ENCODE measurements at regions of chr14 and their contacts with region 1.

Region 1: GRCh38 chr14:105300792-105301533 is at the start of gene BRF1:
- DNase-seq: peak; percentile 98 to 99
- H3K4me3 ChIP-seq: peak within 1 kb of the TSS; percentile 100
- H3K4me3 Mint-ChIP-seq: peak within 1 kb of the TSS; percentile 79
- H3K27ac Mint-ChIP-seq: peak within 1 kb of the TSS; percentile 40
- H3K4me1 ChIP-seq: no peaks in the 10 kb centered on the region
- H3K4me1 Mint-ChIP-seq: peaks cover 7% of the 10 kb centered on the region
- H3K27me3 ChIP-seq: no peaks in the 10 kb centered on the region
- H3K27me3 Mint-ChIP-seq: no peaks in the 10 kb centered on the region
- CTCF ChIP-seq: no peak
- total RNA-seq, gene BRF1: 41.6 and 43.6 TPM in 2 replicates

Region 2: DNA sequence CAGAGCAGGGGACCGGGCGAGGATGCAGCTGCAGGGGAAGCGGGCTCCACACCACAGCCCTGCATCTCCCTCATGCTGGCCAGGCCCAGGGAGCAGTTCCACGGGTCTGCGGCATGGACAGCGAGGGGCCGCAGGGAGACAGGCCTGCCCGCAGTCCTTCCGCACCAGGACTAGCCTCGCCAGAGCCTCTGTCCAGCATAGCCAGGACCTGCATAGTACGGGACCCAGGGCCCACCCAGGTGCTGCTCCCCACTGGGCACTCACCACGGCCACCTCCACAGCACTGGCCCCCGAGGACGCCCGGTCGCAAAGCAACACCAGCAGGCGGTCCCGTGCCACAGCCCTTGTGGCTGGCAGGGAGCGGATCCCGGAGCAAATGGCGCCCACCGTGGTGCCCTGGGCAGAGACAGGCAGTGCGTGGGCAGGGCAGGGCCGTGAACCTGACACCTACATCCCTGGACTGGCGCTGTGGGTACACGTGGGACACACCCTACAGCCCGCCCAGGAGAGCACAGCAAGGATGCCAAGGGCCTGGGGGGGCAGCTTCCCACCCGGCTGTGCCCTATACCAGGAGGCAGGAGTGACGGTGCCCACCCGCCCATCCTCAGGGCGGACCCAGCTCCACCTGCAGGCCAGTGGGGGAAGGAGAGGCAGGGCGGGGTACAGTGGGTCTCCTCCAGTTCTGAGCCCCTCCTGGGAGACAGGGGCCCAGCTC is 156.1 kb before region 1 on chr14:
- CTCF ChIA-PET with region 1: no interaction called
- POLR2A ChIA-PET with region 1: no interaction called
- intact Hi-C with region 1: no loop called
- DNase-seq: no peak
- H3K4me3 ChIP-seq: no peak overlapping the region
- H3K4me3 Mint-ChIP-seq: no peak overlapping the region
- H3K27ac Mint-ChIP-seq: no peak overlapping the region
- H3K4me1 ChIP-seq: no peaks in the 10 kb centered on the region
- H3K4me1 Mint-ChIP-seq: no peaks in the 10 kb centered on the region
- H3K27me3 ChIP-seq: no peaks in the 10 kb centered on the region
- H3K27me3 Mint-ChIP-seq: no peaks in the 10 kb centered on the region
- CTCF ChIP-seq: peak in 1 of 2 experiments; percentile 7

Region 3: GRCh38 chr14:105314287-105315200 is 13.6 kb after region 1 on chr14 and contains the start of gene PACS2:
- CTCF ChIA-PET with region 1: interaction called, 9 read pairs
- POLR2A ChIA-PET with region 1: interaction called, 30 read pairs
- intact Hi-C with region 1: no loop called
- DNase-seq: peak; percentile 51 to 85
- H3K4me3 ChIP-seq: peak within 1 kb of the TSS; percentile 93
- H3K4me3 Mint-ChIP-seq: peak within 1 kb of the TSS; percentile 92
- H3K27ac Mint-ChIP-seq: peak within 1 kb of the TSS; percentile 69
- H3K4me1 ChIP-seq: no peaks in the 10 kb centered on the region; the same call in 1 of the 2 replicates
- H3K4me1 Mint-ChIP-seq: no peaks in the 10 kb centered on the region
- H3K27me3 ChIP-seq: no peaks in the 10 kb centered on the region
- H3K27me3 Mint-ChIP-seq: no peaks in the 10 kb centered on the region
- CTCF ChIP-seq: no peak
- total RNA-seq, gene PACS2: 58.1 and 60.0 TPM in 2 replicates

Region 4: DNA sequence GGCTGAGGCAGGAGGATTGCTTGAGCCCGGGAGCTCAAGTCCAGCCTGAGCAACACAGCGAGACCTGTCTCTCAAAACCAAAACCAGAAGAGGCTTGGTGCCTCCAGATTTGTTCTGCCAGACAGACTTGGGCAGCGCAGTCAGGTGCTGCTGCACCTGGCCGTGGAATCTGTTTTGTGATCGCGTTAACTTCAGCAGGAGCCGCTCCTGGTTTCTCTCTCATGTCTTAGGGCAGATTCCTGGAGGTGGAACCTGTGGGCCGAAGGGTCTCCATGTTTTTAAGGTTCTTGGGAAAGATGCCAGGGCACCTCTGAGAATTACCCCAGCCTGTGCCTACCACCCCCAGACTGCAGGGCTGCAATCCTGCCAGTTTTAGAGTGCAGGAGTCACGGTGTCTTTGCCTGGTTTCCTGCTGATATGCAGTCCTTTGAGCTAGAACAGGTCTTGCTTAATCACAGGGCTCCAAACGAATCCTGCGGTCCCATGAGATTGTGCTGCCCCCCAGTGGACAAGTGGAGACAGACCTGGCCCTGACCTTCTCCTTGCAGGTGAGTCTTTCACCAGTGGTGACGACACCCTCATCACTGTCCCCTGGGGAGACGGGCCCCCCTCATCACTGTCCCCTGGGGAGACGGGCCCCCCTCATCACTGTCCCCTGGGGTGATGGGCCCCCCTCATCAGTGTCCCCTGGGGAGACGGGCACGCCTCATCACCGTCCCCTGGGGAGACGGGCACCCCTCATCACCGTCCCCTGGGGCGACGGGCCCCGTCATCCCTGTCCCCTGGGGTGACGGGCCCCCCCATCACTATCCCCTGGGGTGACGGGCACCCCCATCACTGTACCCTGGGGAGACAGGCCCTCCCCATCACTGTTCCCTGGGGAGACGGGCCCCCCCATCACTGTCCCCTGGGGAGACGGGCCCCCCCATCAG is 51.2 kb after region 1 on chr14:
- CTCF ChIA-PET with region 1: interaction called, 13 read pairs
- POLR2A ChIA-PET with region 1: interaction called, 4 read pairs
- intact Hi-C with region 1: no loop called
- DNase-seq: peak; percentile 85 to 91
- H3K4me3 ChIP-seq: no peak overlapping the region
- H3K4me3 Mint-ChIP-seq: no peak overlapping the region
- H3K27ac Mint-ChIP-seq: no peak overlapping the region
- H3K4me1 ChIP-seq: no peaks in the 10 kb centered on the region
- H3K4me1 Mint-ChIP-seq: no peaks in the 10 kb centered on the region
- H3K27me3 ChIP-seq: no peaks in the 10 kb centered on the region
- H3K27me3 Mint-ChIP-seq: no peaks in the 10 kb centered on the region
- CTCF ChIP-seq: peak; percentile 79 to 83